OCI-LY7 (cell line): ENCODE measurements at regions of chr4 and their contacts with region 1.

Region 1: DNA sequence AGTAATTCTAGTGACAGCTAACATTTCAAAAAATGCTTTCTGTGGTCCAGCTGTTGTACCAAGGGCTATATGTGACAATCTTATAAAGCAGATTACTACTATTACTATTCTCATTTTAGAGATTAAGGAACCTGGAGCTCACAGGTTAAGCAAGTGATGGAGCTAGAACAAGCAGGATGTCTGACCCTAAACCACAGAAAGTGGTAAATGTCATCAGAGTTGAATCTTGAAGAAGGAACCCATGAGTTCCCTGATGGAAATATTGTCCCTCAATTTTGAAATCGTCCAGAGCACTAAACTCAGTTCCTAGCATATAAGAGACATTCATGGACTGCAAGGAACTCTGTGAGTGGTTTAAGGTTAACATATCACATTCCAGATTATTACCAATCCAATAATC is 214.0 kb downstream of the APBB2 start:
- DNase-seq: no peak
- H3K4me3 ChIP-seq: no peak overlapping the region
- H3K27ac ChIP-seq: no peak overlapping the region
- H3K4me1 ChIP-seq: peaks cover 34% of the 10 kb centered on the region
- CTCF ChIP-seq: no peak

Region 2: DNA sequence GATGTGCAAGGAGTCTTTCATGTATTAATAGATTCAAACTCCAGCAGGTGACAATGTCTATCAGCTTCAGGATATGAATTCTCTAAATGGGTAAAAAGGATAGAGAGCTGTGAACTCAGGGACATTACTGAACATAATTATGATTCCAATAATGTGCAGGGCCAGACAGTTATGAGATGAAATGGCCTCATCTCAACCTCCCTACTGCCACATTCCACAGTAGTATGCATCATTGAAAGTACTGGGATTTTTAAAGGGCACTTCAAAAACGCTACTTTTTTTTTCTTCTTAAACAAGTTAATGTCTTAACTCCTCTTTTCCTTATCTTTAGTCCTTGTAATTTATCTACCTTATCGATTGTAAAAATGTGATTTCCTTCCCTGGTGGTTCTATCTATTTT is 11.9 kb after region 1 on chr4:
- CTCF ChIA-PET with region 1: no interaction called
- POLR2A ChIA-PET with region 1: interaction called, 14 read pairs
- intact Hi-C with region 1: no loop called
- DNase-seq: no peak
- H3K4me3 ChIP-seq: no peak overlapping the region
- H3K27ac ChIP-seq: no peak overlapping the region
- H3K4me1 ChIP-seq: peaks cover 8% of the 10 kb centered on the region
- CTCF ChIP-seq: no peak